Endothelial cell of umbilical vein (primary cell): ENCODE measurements at regions of chr6 and their contacts with region 1.

Region 1: GRCh38 chr6:16761471-16762267 is 409 bp upstream of the ATXN1 start:
- DNase-seq: peak; percentile 89
- H3K4me3 ChIP-seq: peak overlapping the region; percentile 76 to 86 (median 78)
- H3K27ac ChIP-seq: peak overlapping the region; percentile 88
- H3K4me1 ChIP-seq: peaks cover 43% of the 10 kb centered on the region
- H3K27me3 ChIP-seq: no peaks in the 10 kb centered on the region
- CTCF ChIP-seq: peak; percentile 23 to 33
- POLR2A ChIP-seq: no peak

Region 2: DNA sequence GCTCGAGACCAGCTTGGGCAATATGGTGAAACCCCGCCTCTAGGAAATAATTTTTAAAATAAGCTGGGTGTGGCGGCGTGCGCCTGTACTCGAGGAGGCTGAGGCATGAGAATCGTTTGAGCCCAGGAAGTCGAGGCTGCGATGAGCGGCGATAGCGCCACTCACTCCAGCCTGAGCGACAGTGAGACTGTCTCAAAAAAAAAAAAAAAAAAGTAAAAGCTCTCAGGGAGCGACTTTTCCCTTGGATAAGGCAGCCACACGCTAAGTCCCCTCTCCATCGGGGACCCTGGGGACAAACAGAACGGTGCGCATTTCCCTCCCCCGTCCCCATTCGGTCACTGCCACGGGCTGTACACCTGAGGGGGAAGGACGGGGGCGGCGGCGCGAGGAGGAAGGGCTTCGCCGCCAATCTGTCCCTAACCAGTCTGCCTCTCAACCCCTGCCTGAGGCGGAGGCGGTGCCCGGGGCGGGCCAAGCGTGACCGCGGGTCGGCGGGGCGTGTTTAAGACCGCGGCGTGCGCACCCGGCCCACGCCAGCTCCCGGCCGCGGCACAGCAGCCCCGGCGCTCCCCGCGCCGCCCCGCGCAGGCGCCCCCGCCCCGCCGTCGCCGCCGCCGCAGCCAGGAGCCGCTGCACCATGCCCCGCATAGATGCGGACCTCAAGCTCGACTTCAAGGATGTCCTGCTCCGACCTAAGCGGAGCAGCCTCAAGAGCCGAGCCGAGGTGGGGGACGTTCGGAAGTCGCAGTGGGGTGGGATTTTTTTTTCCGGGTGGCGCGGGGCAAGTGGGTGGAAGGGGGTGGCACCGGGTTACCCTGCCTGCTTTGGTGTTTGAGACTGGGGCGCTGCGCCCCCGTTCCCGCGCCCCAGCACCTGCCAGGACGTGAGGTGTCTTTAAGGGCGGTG is 523.4 kb before region 1 on chr6 and contains the start of gene GMPR:
- CTCF ChIA-PET with region 1: no interaction called
- POLR2A ChIA-PET with region 1: no interaction called
- dilution Hi-C with region 1: no loop called
- intact Hi-C with region 1: loop called (anchors 2 kb)
- DNase-seq: peak; percentile 81
- H3K4me3 ChIP-seq: peak within 1 kb of the TSS; percentile 63 to 97 (median 73)
- H3K27ac ChIP-seq: peak within 1 kb of the TSS; percentile 75
- H3K4me1 ChIP-seq: peaks cover 32% of the 10 kb centered on the region
- H3K27me3 ChIP-seq: no peaks in the 10 kb centered on the region
- CTCF ChIP-seq: no peak
- POLR2A ChIP-seq: no peak
- total RNA-seq, gene GMPR: 36.3 and 43.2 TPM in 2 replicates

Region 3: GRCh38 chr6:16514249-16514648 is 247.4 kb before region 1 on chr6:
- CTCF ChIA-PET with region 1: interaction called, 234 read pairs
- POLR2A ChIA-PET with region 1: interaction called, 6 read pairs
- dilution Hi-C with region 1: no loop called
- intact Hi-C with region 1: loop called (anchors 1 kb)
- DNase-seq: peak; percentile 60
- H3K4me3 ChIP-seq: no peak overlapping the region
- H3K27ac ChIP-seq: no peak overlapping the region
- H3K4me1 ChIP-seq: peaks cover 6% of the 10 kb centered on the region
- H3K27me3 ChIP-seq: no peaks in the 10 kb centered on the region
- CTCF ChIP-seq: peak; percentile 36 to 55
- POLR2A ChIP-seq: no peak

Region 4: GRCh38 chr6:16684896-16685554 is 76.6 kb before region 1 on chr6:
- CTCF ChIA-PET with region 1: interaction called, 22 read pairs
- POLR2A ChIA-PET with region 1: no interaction called
- dilution Hi-C with region 1: no loop called
- intact Hi-C with region 1: no loop called
- DNase-seq: no peak
- H3K4me3 ChIP-seq: no peak overlapping the region
- H3K27ac ChIP-seq: no peak overlapping the region
- H3K4me1 ChIP-seq: peaks cover 28% of the 10 kb centered on the region
- H3K27me3 ChIP-seq: no peaks in the 10 kb centered on the region
- CTCF ChIP-seq: no peak
- POLR2A ChIP-seq: no peak

Region 5: DNA sequence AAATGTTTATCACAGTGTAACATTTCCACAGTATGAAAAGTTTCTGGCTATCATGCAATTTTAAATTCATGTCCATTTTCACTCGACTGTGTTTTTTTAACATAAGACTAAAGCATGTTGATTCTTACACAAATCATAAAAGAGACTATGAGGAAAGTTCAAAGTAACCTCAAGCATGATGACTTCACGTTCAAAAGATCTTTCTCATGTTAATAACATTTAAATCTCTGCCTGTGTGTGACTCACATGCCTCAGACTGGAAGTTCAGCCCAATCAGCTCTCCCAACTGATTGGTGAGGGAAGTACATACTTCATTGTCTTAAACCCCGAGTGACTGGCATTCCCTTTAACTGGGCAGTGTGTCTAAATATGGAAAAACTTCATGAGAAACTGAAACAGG is 37.8 kb before region 1 on chr6:
- CTCF ChIA-PET with region 1: interaction called, 59 read pairs
- POLR2A ChIA-PET with region 1: interaction called, 11 read pairs
- dilution Hi-C with region 1: no loop called
- intact Hi-C with region 1: loop called (anchors 1 kb)
- DNase-seq: peak; percentile 93
- H3K4me3 ChIP-seq: no peak overlapping the region
- H3K27ac ChIP-seq: peak overlapping the region; percentile 83
- H3K4me1 ChIP-seq: peaks cover 64% of the 10 kb centered on the region
- H3K27me3 ChIP-seq: no peaks in the 10 kb centered on the region
- CTCF ChIP-seq: no peak
- POLR2A ChIP-seq: no peak

Region 6: DNA sequence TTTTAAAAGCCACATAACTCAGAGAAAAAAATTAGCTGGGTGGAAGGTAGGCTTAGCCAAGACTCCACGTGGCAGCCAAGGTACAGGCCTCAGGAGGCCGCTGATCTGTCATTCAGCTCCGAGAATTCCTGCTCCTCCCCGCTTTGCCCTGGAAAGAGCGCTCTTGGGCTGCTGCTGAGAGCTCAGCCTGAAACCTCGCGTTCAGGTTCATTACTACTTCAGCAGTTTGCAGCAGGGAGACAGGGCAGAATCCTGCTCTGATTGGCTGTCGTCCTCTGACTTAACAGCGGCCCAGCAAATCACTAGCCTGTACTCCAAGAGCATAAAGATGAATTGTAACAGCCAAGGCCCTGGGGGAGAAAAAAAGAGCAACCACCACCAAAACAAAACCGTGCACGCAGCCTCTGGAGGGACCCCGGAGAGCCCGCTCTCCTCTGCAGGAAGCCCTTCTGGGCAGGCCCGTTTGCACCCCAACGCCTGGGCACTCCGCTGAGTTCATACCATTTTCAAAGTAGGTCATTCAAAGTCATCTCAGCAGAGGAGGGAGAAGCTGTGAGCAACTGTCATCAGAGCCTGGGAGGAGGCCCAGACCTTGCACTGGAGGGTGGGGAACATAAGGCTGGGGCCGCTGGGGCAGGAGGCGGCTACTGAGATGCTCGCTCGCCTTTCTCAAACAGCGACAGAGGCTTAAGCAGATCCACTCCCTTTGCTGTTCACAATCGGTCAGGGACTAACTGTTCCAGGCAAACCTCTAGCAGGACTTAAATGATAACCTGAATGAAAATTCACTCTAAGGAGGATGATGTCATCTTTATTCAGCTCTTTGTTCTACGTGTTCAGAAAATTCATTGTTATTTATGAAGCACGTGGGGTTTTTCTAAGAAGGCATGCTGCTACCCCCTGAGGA is 41.9 kb after region 1 on chr6:
- CTCF ChIA-PET with region 1: no interaction called
- POLR2A ChIA-PET with region 1: no interaction called
- dilution Hi-C with region 1: no loop called
- intact Hi-C with region 1: no loop called
- DNase-seq: peak; percentile 72
- H3K4me3 ChIP-seq: no peak overlapping the region
- H3K27ac ChIP-seq: no peak overlapping the region
- H3K4me1 ChIP-seq: no peaks in the 10 kb centered on the region
- H3K27me3 ChIP-seq: peaks cover 0 to 3% of the 10 kb centered on the region in 2 experiments
- CTCF ChIP-seq: no peak
- POLR2A ChIP-seq: no peak

Region 7: GRCh38 chr6:17086469-17086868 is 324.8 kb after region 1 on chr6:
- CTCF ChIA-PET with region 1: interaction called, 103 read pairs
- POLR2A ChIA-PET with region 1: no interaction called
- dilution Hi-C with region 1: no loop called
- intact Hi-C with region 1: loop called (anchors 1 kb)
- DNase-seq: peak; percentile 76
- H3K4me3 ChIP-seq: no peak overlapping the region
- H3K27ac ChIP-seq: no peak overlapping the region
- H3K4me1 ChIP-seq: no peaks in the 10 kb centered on the region
- H3K27me3 ChIP-seq: peaks cover 7 to 17% of the 10 kb centered on the region in 2 experiments
- CTCF ChIP-seq: peak; percentile 60 to 61
- POLR2A ChIP-seq: no peak